AG04450 (cell line): ENCODE measurements at regions of chr2 and their contacts with region 1.

Region 1: DNA sequence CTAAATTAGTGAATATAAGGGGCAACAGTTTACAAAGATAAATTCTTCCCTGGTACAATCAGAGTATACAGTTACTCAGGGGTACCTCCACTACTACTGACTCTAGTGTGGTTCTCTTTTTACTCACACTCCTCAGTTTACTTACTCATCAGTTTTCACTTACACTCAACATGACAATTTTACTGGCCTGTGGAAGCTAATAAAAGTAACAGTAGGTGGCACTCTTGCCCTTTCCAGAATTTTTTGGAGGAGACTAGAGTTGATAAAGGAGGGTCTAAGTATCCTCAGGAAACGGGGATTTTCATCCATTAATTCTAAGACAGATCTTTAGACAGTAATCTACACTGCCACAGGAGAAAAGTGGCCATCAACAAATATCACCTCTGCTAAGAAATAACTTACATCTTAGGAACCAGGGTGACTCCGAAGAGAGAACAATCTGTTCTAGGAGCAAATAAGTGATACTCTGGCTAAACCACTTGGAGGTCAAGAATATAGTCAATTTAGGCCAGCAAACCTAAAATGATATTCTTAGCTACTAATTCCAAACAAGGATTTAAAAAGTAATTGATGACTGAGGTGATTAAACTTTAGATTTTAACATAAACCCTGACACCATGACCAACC is 61.3 kb downstream of the ATL2 start:
- DNase-seq: no peak
- H3K4me3 ChIP-seq: no peak overlapping the region
- H3K27ac ChIP-seq: no peak overlapping the region
- H3K27me3 ChIP-seq: no peaks in the 10 kb centered on the region
- CTCF ChIP-seq: peak; percentile 84

Region 2: DNA sequence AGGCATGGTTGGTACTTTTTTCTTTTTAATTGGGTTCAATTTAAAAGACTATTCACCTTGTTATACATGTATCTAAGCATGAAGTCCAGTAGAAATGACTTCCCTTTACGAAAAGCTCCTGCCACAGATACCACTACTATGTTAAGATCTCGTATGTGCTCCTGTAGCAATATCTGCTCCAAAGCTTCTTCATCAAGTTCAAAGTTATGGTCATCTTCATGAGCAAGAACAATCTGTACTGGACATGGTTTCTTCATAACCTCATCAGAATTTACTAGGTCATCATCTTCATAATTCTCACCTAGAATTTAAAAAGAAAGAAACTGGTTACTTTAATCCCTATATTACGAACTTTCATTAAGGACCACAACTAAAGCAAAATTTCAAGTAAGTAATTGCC is 27.4 kb after region 1 on chr2:
- CTCF ChIA-PET with region 1: interaction called, 10 read pairs
- POLR2A ChIA-PET with region 1: no interaction called
- DNase-seq: no peak
- H3K4me3 ChIP-seq: no peak overlapping the region
- H3K27ac ChIP-seq: no peak overlapping the region
- H3K27me3 ChIP-seq: no peaks in the 10 kb centered on the region
- CTCF ChIP-seq: no peak

Region 3: GRCh38 chr2:38377050-38377828 is 61.4 kb after region 1 on chr2 and contains the start of gene ATL2:
- CTCF ChIA-PET with region 1: interaction called, 10 read pairs
- POLR2A ChIA-PET with region 1: no interaction called
- DNase-seq: peak; percentile 77
- H3K4me3 ChIP-seq: peak within 1 kb of the TSS; percentile 92
- H3K27ac ChIP-seq: peak within 1 kb of the TSS; percentile 83
- H3K27me3 ChIP-seq: peaks cover 2% of the 10 kb centered on the region
- CTCF ChIP-seq: 0 out of 2 replicates have a peak, but pooled peaks have one; percentile 3
- polyA plus RNA-seq, gene ATL2: 12.9 and 16.1 TPM in 2 replicates

Region 4: DNA sequence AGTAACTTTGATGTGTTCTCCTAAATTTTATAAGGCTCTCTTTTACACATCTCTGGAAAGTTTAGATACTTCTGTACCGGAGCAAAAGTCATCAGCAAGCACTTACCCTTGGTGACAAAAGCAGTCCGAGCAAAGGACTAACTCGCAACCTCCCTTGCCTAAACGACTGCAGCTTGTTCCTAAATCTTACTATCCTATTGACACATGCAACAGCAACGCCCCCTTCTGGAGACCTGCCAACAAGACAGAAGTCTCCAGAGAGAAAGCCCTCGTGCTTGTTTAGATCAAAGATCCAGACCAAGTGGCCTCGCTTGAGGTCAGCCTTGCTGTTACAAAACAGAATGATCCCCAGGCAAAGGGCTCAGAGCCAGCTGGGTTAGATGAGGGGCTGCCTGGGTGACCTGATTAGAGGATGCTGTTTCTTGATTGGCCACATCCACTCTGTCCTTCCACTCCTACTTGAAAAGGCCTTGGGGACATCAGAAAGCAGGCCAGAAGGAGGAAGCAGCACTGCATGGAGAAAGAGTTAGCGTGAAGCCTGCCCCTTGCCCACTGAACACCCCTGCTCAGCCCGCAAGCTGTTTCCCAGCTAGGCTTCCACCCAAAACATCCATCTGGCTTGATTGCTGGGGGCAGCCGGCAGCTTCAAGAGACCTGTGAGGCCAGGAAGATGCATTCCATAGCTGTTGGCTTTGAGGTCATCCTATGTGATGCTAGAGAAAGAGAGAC is 192.7 kb after region 1 on chr2:
- CTCF ChIA-PET with region 1: interaction called, 79 read pairs
- POLR2A ChIA-PET with region 1: no interaction called
- DNase-seq: no peak
- H3K4me3 ChIP-seq: no peak overlapping the region
- H3K27ac ChIP-seq: no peak overlapping the region
- H3K27me3 ChIP-seq: peaks cover 13% of the 10 kb centered on the region
- CTCF ChIP-seq: peak; percentile 28; the same call in 1 of the 2 replicates

Region 5: GRCh38 chr2:38535744-38536506 is 220.1 kb after region 1 on chr2:
- CTCF ChIA-PET with region 1: interaction called, 14 read pairs
- POLR2A ChIA-PET with region 1: no interaction called
- DNase-seq: no peak
- H3K4me3 ChIP-seq: peak overlapping the region; percentile 66
- H3K27ac ChIP-seq: no peak overlapping the region
- H3K27me3 ChIP-seq: no peaks in the 10 kb centered on the region
- CTCF ChIP-seq: peak; percentile 84

Region 6: GRCh38 chr2:38572167-38572566 is 256.3 kb after region 1 on chr2:
- CTCF ChIA-PET with region 1: interaction called, 19 read pairs
- POLR2A ChIA-PET with region 1: no interaction called
- DNase-seq: peak; percentile 34
- H3K4me3 ChIP-seq: no peak overlapping the region
- H3K27ac ChIP-seq: no peak overlapping the region
- H3K27me3 ChIP-seq: no peaks in the 10 kb centered on the region
- CTCF ChIP-seq: no peak

Region 7: DNA sequence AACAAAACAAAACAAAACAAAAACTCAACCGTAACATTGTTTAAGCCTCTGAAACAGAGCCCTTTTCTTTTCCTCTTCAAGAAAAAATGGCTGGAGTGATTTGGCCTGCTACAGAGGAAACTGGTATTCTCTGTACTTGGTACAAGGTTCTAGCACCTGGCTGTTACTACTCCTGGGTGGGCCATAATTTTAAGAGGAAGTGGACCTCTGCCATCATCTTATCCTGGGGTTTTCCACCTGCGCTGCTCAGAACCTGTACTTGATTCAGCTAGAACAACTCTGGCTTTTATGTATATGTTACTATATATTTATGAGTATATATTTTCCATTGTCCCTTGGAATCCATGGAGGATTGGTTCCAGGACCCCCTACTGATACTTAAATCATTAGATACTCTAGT is 412.9 kb after region 1 on chr2:
- CTCF ChIA-PET with region 1: interaction called, 20 read pairs
- POLR2A ChIA-PET with region 1: no interaction called
- DNase-seq: no peak
- H3K4me3 ChIP-seq: no peak overlapping the region
- H3K27ac ChIP-seq: no peak overlapping the region
- H3K27me3 ChIP-seq: no peaks in the 10 kb centered on the region
- CTCF ChIP-seq: no peak